Naive thymus-derived CD4-positive, alpha-beta T cell (primary cell): ENCODE measurements at regions of chr3 and their contacts with region 1.

Region 1: DNA sequence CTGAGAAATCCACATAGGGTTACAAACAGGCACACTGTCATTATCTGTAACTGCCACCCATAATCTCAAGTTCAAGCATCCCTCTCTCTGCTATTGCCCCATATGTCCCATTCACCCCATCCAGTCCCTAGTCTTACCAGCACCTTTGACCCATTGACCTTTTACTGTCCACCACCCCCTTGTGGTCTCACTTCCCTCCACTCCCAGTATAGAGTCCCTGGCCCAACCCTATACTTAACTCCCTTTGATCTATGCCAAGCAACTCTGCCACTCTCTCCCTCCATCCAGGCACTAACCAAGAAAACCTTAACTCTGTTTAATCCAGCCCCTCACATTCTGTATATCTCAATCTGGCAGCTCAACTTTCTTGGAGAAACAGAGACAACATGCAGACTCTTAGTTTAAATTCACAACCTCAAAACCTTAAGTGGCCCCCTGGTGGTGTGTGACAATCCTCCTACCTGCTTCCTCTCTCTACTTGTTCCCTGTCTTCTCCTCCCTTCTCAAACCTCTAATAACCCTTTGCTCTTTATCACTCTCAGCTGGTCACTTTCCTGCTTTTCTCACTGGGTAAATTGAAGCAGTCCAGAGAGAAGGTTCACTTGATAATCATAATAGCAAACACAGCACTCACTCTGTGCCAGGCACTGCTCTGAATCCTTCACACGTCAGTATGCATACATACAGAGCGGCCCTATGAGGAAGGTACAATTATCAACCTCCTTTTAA is 162.7 kb downstream of the STT3B start:
- DNase-seq: peak in 6 of 9 donors; percentile 11 to 42 (median 36)
- ATAC-seq: peak; percentile 52
- H3K4me3 ChIP-seq: no peak overlapping the region
- H3K4me3 Mint-ChIP-seq: no peak overlapping the region
- H3K27ac ChIP-seq: no peak overlapping the region
- H3K27ac Mint-ChIP-seq: no peak overlapping the region
- H3K4me1 ChIP-seq: no peaks in the 10 kb centered on the region
- H3K4me1 Mint-ChIP-seq: peaks cover 0 to 1% (median 0%) of the 10 kb centered on the region in 7 donors
- H3K27me3 ChIP-seq: no peaks in the 10 kb centered on the region
- H3K27me3 Mint-ChIP-seq: no peaks in the 10 kb centered on the region

Region 2: DNA sequence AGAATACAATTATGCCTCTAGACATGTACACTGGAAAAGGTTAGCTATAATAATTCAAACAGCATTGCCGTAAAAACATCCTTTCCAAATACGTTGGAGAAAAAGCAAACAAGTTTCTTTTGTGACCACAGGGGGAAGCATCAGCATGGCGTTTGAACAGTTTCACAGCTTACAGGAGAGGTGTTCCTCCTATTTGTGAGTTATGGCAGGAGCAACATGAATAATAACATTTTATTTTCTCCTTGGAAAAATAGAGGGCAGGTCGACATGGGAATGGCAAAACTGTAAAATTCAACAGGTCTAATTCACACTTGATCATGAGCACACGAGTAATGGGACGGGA is 761.3 kb before region 1 on chr3:
- CTCF ChIA-PET with region 1: no interaction called
- POLR2A ChIA-PET with region 1: no interaction called
- intact Hi-C with region 1: loop called in 1 of 2 experiments (anchors 1 kb)
- DNase-seq: peak in 4 of 9 donors; percentile 2 to 16 (median 10)
- ATAC-seq: no peak
- H3K4me3 ChIP-seq: no peak overlapping the region
- H3K4me3 Mint-ChIP-seq: peak overlapping the region in 3 of 10 donors; percentile 11 to 65 (median 24)
- H3K27ac ChIP-seq: no peak overlapping the region
- H3K27ac Mint-ChIP-seq: no peak overlapping the region
- H3K4me1 ChIP-seq: no peaks in the 10 kb centered on the region
- H3K4me1 Mint-ChIP-seq: peaks cover 2 to 10% (median 8%) of the 10 kb centered on the region in 7 donors
- H3K27me3 ChIP-seq: no peaks in the 10 kb centered on the region
- H3K27me3 Mint-ChIP-seq: no peaks in the 10 kb centered on the region

Region 3: DNA sequence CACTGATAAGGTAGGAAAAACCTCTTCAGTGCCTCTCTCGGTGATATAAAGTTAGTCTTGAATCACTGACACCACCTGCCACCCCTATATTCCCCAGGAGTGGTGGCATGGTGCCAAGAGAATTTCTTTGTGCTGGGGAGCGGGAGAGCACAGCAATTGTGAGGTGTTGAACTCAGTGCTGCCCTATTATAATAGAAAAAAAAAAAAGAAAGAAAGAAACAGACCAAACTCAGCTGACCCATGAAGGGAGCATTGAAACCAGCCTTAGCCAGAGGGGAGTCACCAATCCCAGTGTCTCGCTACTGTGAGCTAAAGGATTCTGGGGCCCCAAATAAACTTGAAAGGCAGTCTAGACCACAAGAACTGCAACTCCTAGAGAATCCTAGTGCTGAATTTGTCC is 364.1 kb before region 1 on chr3:
- CTCF ChIA-PET with region 1: no interaction called
- POLR2A ChIA-PET with region 1: no interaction called
- intact Hi-C with region 1: no loop called
- DNase-seq: no peak
- ATAC-seq: no peak
- H3K4me3 ChIP-seq: no peak overlapping the region
- H3K4me3 Mint-ChIP-seq: no peak overlapping the region
- H3K27ac ChIP-seq: no peak overlapping the region
- H3K27ac Mint-ChIP-seq: no peak overlapping the region
- H3K4me1 ChIP-seq: no peaks in the 10 kb centered on the region
- H3K4me1 Mint-ChIP-seq: peaks cover 0 to 3% (median 0%) of the 10 kb centered on the region in 7 donors
- H3K27me3 ChIP-seq: no peaks in the 10 kb centered on the region
- H3K27me3 Mint-ChIP-seq: no peaks in the 10 kb centered on the region

Region 4: GRCh38 chr3:31567036-31567435 is 128.4 kb before region 1 on chr3:
- CTCF ChIA-PET with region 1: no interaction called
- POLR2A ChIA-PET with region 1: no interaction called
- intact Hi-C with region 1: loop called in 1 of 2 experiments (anchors 5 kb)
- DNase-seq: peak in 7 of 9 donors; percentile 14 to 41 (median 21)
- ATAC-seq: peak; percentile 82
- H3K4me3 ChIP-seq: no peak overlapping the region
- H3K4me3 Mint-ChIP-seq: peak overlapping the region in 8 of 10 donors; percentile 3 to 59 (median 56)
- H3K27ac ChIP-seq: no peak overlapping the region
- H3K27ac Mint-ChIP-seq: peak overlapping the region in 4 of 9 donors; percentile 11 to 33 (median 20)
- H3K4me1 ChIP-seq: peaks cover 38 to 57% of the 10 kb centered on the region in 2 donors
- H3K4me1 Mint-ChIP-seq: peaks cover 63 to 95% (median 91%) of the 10 kb centered on the region in 7 donors
- H3K27me3 ChIP-seq: no peaks in the 10 kb centered on the region
- H3K27me3 Mint-ChIP-seq: no peaks in the 10 kb centered on the region

Region 5: DNA sequence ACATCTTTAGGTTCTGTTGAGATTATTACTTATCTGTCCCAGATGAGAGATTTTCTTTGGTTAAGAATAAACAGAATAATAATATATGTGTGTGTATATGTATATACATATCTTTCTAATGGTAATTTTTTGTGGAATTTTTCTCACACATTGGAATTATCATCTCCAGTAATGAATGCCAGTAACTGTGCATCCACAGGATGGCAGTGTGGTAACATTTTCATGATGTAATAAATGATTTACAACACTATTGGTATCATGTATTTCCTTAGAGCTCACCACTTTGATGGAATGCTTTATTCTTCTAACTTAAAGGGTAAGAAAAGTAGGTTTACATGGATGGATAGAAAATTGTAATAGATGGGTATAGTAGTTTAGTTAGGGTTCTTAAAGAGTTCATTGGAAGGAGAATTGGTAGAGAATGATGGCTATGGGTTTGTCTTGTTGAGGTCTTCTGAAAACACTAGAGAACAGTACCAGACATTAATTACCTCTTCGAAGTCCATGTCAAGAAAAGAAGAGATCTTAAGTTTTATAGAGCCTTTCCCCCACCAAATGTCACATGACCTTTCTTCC is 84.7 kb before region 1 on chr3:
- CTCF ChIA-PET with region 1: no interaction called
- POLR2A ChIA-PET with region 1: no interaction called
- intact Hi-C with region 1: loop called in 1 of 2 experiments (anchors 2 kb)
- DNase-seq: no peak
- ATAC-seq: no peak
- H3K4me3 ChIP-seq: no peak overlapping the region
- H3K4me3 Mint-ChIP-seq: peak overlapping the region in 1 of 10 donors; percentile 36
- H3K27ac ChIP-seq: no peak overlapping the region
- H3K27ac Mint-ChIP-seq: peak overlapping the region in 5 of 9 donors; percentile 2 to 55 (median 17)
- H3K4me1 ChIP-seq: peaks cover 5 to 8% of the 10 kb centered on the region in 2 donors
- H3K4me1 Mint-ChIP-seq: peaks cover 46 to 90% (median 75%) of the 10 kb centered on the region in 7 donors
- H3K27me3 ChIP-seq: no peaks in the 10 kb centered on the region
- H3K27me3 Mint-ChIP-seq: no peaks in the 10 kb centered on the region